Left cardiac atrium (tissue), 4 donors: ENCODE measurements at regions of chr16 and their contacts with region 1.

Region 1: GRCh38 chr16:4511441-4512082 is 27.0 kb downstream of the CDIP1 start:
- DNase-seq: peak; percentile 50
- ATAC-seq: peak; percentile 51 to 58

Region 2: DNA sequence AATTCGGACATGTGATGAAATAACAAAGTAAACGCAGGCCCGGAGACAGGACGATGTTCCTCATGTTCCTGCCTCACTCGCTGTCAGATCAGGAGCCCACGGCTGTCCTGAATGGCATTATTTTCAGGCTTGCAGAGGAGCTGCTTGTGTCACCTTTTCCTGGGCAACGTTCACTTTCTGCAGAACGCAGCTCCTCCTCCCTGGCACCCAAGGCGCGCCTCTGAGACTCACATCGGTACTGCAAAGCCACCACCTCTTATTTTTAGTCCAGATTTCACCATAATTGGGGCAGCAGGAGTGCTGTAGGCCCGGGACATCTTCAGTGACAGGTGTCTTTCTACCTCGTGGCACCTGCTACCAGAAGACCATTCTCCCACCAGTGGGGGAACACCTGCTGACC is 36.6 kb after region 1 on chr16:
- intact Hi-C with region 1: loop called (anchors 5 kb)
- DNase-seq: no peak
- ATAC-seq: no peak